ENCODE measurements at regions of chr20 and their contacts with region 1.

Region 1: GRCh38 chr20:48316458-48317038 is 511.3 kb downstream of the PREX1 start:
- DNase-seq: no peak
- H3K4me3 ChIP-seq: no peak overlapping the region
- H3K27ac ChIP-seq: no peak overlapping the region
- H3K4me1 ChIP-seq: no peaks in the 10 kb centered on the region; a peak in 1 of 4 replicates
- H3K27me3 ChIP-seq: no peaks in the 10 kb centered on the region; the same call in 1 of the 2 replicates
- CTCF ChIP-seq: no peak
- EP300 ChIP-seq: no peak
- RAD21 ChIP-seq: no peak

Region 2: GRCh38 chr20:48295445-48295963 is 21.0 kb before region 1 on chr20:
- CTCF ChIA-PET with region 1: no interaction called
- POLR2A ChIA-PET with region 1: no interaction called
- DNase-seq: no peak
- H3K4me3 ChIP-seq: no peak overlapping the region
- H3K27ac ChIP-seq: peak overlapping the region; percentile 84
- H3K4me1 ChIP-seq: peaks cover 29 to 42% of the 10 kb centered on the region in 2 experiments
- H3K27me3 ChIP-seq: no peaks in the 10 kb centered on the region
- CTCF ChIP-seq: peak; percentile 62
- EP300 ChIP-seq: peak; percentile 48 to 95; a peak in 3 of 4 replicates
- RAD21 ChIP-seq: peak; percentile 67

Region 3: GRCh38 chr20:48329635-48330277 is 13.2 kb after region 1 on chr20:
- CTCF ChIA-PET with region 1: interaction called, 10 read pairs
- POLR2A ChIA-PET with region 1: no interaction called
- DNase-seq: peak; percentile 78
- H3K4me3 ChIP-seq: no peak overlapping the region
- H3K27ac ChIP-seq: peak overlapping the region in 1 of 2 experiments; percentile 68; a peak in 2 of 4 replicates
- H3K4me1 ChIP-seq: peaks cover 7 to 8% of the 10 kb centered on the region in 2 experiments; a peak in 3 of 4 replicates
- H3K27me3 ChIP-seq: no peaks in the 10 kb centered on the region
- CTCF ChIP-seq: peak; percentile 50
- EP300 ChIP-seq: no peak
- RAD21 ChIP-seq: peak; percentile 62

Measured in SK-N-SH (cell line).